Head of caudate nucleus (tissue), 42 donors: ENCODE measurements at regions of chr1 and their contacts with region 1.

Region 1: DNA sequence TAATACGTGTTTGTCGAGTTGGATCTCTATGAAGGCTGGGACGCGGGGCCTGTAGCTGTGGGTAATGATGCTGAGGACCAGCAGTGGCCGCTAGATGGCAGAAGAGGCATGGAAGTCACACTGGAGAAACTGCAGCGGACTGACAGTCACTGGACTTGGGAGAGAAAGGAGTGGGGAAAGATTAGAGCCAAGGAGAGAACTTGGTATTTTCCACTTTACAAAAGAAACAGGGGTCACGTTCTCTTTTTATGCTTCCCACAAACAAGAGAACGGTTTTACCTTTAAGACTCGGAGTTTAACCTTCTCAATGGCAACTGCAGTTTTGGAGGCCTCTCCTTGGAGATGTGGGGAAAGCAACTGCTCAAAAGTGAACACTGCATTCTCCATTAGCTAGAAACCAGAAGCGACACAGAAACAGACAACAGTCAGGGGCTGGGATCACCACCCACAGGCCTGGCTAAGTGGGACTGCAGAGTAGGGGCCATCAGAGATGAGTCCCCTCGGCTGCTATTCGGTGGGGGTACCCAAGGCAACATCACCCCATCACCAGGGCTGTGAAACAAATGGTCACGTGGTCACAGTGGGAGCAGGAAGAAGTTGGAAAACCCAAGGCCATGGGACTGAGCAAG is 51.1 kb upstream of the EDEM3 start:
- DNase-seq: peak; percentile 78 to 95 (median 90)

Region 2: GRCh38 chr1:184622136-184622823 is 183.5 kb before region 1 on chr1:
- intact Hi-C with region 1: no loop called
- DNase-seq: no peak

Region 3: GRCh38 chr1:184973272-184974055 is 167.7 kb after region 1 on chr1:
- intact Hi-C with region 1: loop called (anchors 5 kb)
- DNase-seq: peak in 22 of 42 donors; percentile 4 to 58 (median 16)